ENCODE measurements at regions of chr2 and their contacts with region 1.

Region 1: GRCh38 chr2:199488772-199489400 is 31.1 kb upstream of the SATB2 start:
- DNase-seq: no peak
- ATAC-seq: peak; percentile 73
- H3K4me3 ChIP-seq: no peak overlapping the region
- H3K27ac ChIP-seq: no peak overlapping the region
- H3K4me1 ChIP-seq: no peaks in the 10 kb centered on the region
- H3K27me3 ChIP-seq: no peaks in the 10 kb centered on the region
- CTCF ChIP-seq: peak; percentile 72 to 90 (median 83)
- EP300 ChIP-seq: no peak
- POLR2A ChIP-seq: no peak
- RAD21 ChIP-seq: peak; percentile 72

Region 2: DNA sequence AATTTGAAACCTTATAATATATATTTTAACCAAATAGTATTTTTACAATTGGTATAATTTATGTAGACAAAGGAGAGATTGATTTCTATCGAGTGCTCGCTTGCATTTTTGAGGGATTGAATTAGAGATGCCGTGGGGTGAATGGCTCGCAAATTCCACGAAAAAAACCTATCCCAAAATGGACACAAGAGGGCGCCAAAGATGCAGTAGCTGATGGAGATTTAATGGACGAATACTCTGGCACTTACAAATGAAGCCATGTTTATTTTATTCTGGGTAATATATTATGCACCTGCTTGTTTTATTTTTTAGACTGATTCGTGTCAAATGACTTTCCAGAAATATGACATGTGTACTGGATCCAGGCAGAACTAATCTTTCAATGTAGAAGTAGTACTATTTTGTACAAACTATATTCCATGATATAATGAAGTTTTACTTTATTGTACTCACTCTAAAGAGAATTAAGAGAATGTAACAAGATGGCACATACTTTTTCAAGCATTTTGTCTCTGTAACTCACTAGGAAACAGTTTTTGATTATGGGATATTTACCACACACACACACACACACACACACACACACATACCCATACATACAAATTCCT is 1179.1 kb before region 1 on chr2:
- CTCF ChIA-PET with region 1: interaction called, 311 read pairs
- POLR2A ChIA-PET with region 1: no interaction called
- RAD21 ChIA-PET with region 1: interaction called, 132 read pairs
- SMC1A ChIA-PET with region 1: interaction called, 130 read pairs
- in situ Hi-C with region 1: loop called (anchors 5 kb)
- intact Hi-C with region 1: loop called (anchors 1 kb)
- DNase-seq: no peak
- ATAC-seq: peak; percentile 67
- H3K4me3 ChIP-seq: no peak overlapping the region
- H3K27ac ChIP-seq: no peak overlapping the region
- H3K4me1 ChIP-seq: no peaks in the 10 kb centered on the region
- H3K27me3 ChIP-seq: peaks cover 1 to 2% of the 10 kb centered on the region in 2 experiments; a peak in 1 of 4 replicates
- CTCF ChIP-seq: peak; percentile 69 to 83 (median 81)
- EP300 ChIP-seq: no peak
- POLR2A ChIP-seq: no peak
- RAD21 ChIP-seq: peak; percentile 79

Region 3: DNA sequence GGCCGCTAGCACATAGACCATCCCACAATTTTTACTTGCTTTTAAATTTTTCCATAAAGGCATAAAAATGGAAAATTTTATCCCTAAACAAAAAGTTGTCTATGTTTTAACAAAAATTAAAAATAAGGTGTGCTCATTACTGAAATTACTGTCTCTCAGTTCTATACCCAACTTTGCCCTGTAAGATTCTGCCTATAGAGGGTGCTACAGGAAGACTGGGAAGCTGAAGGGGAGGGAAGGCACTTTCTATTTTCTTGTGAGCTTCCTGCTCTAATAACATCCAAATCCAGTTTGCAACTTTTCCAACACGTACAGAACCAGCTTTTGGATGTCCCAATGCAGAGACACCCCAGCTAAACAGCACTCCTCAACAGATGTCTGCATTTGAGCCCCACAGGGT is 1017.6 kb before region 1 on chr2:
- CTCF ChIA-PET with region 1: interaction called, 23 read pairs
- POLR2A ChIA-PET with region 1: no interaction called
- RAD21 ChIA-PET with region 1: interaction called, 13 read pairs
- SMC1A ChIA-PET with region 1: interaction called, 12 read pairs
- in situ Hi-C with region 1: no loop called
- intact Hi-C with region 1: no loop called
- DNase-seq: no peak
- ATAC-seq: no peak
- H3K4me3 ChIP-seq: no peak overlapping the region
- H3K27ac ChIP-seq: no peak overlapping the region
- H3K4me1 ChIP-seq: no peaks in the 10 kb centered on the region
- H3K27me3 ChIP-seq: no peaks in the 10 kb centered on the region
- CTCF ChIP-seq: peak in 2 of 3 experiments; percentile 13 to 37; a peak in 2 of 6 replicates
- EP300 ChIP-seq: no peak
- POLR2A ChIP-seq: no peak
- RAD21 ChIP-seq: no peak

Region 4: GRCh38 chr2:198762441-198762840 is 726.4 kb before region 1 on chr2:
- CTCF ChIA-PET with region 1: no interaction called
- POLR2A ChIA-PET with region 1: no interaction called
- RAD21 ChIA-PET with region 1: no interaction called
- SMC1A ChIA-PET with region 1: no interaction called
- in situ Hi-C with region 1: no loop called
- intact Hi-C with region 1: no loop called
- DNase-seq: no peak
- ATAC-seq: peak; percentile 45
- H3K4me3 ChIP-seq: no peak overlapping the region
- H3K27ac ChIP-seq: no peak overlapping the region
- H3K4me1 ChIP-seq: no peaks in the 10 kb centered on the region
- H3K27me3 ChIP-seq: no peaks in the 10 kb centered on the region
- CTCF ChIP-seq: no peak
- EP300 ChIP-seq: no peak
- POLR2A ChIP-seq: no peak
- RAD21 ChIP-seq: no peak

Region 5: DNA sequence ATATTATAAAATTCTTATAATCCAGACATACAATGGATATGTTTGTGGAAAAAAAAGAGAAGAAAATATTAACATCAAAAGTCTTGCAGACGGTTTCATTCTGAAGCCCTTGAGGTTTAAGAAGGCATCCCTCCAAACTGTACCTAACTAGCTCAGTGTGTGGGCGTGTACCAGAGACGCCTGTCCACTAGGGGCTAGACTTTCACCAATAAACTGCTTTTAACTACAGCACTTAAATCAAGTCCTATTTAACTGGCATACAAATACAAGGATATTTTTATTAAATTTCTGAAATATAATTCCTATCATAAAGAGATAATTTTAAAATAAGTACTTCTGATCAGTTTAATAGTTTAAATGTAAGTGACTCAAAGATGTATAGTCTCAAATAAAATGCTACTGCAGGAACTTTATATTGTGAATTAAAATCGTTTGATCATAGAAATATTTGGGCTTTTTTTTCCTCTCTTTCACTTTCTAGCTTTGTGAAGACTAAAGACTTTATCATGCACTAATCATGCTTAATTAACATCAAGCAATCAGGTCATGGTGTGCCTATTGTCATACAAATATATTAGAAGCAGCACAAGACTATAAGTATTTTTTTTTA is 468.9 kb before region 1 on chr2:
- CTCF ChIA-PET with region 1: interaction called, 11 read pairs
- POLR2A ChIA-PET with region 1: no interaction called
- RAD21 ChIA-PET with region 1: interaction called, 5 read pairs
- SMC1A ChIA-PET with region 1: interaction called, 6 read pairs
- in situ Hi-C with region 1: no loop called
- intact Hi-C with region 1: loop called (anchors 10 kb)
- DNase-seq: no peak
- ATAC-seq: peak; percentile 89
- H3K4me3 ChIP-seq: no peak overlapping the region
- H3K27ac ChIP-seq: no peak overlapping the region
- H3K4me1 ChIP-seq: no peaks in the 10 kb centered on the region
- H3K27me3 ChIP-seq: no peaks in the 10 kb centered on the region
- CTCF ChIP-seq: peak; percentile 29 to 51 (median 37); a peak in 4 of 6 replicates
- EP300 ChIP-seq: no peak
- POLR2A ChIP-seq: no peak
- RAD21 ChIP-seq: 0 out of 2 replicates have a peak, but pooled peaks have one; percentile 5

Region 6: DNA sequence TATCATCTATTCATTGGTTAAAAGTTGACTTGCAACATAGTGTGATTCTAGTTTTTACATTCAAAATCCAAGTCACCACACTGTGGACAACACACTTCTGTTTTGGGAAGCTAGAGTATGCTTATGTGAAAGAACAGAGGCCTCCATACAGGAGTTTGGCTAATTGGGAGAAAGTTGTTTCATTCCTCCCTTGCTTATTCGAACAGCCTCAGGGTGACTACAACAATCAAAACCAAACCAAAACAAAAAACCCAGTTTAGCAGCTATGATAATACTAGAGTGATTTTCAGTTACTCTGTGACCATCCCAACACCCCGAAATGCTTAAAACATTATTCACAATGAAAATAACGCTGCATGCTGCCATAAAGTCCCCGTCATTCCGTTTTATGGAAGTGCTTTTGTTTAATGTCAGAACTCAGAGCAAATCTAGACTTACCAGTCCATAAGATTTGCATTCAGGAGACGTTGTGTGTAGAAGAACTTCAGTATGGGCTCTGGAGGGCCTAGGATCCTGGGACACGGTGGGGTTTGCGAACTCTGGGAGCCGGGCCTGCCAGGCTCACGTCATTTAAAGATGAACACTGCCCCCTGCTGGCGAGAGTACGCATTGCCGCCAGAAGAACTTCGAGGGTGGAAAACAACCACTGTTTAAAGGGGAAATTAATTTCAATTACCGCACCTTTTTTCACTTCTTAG is 250.7 kb after region 1 on chr2:
- CTCF ChIA-PET with region 1: interaction called, 16 read pairs
- POLR2A ChIA-PET with region 1: no interaction called
- RAD21 ChIA-PET with region 1: interaction called, 5 read pairs
- SMC1A ChIA-PET with region 1: interaction called, 12 read pairs
- in situ Hi-C with region 1: no loop called
- intact Hi-C with region 1: loop called (anchors 5 kb)
- DNase-seq: no peak
- ATAC-seq: peak; percentile 68
- H3K4me3 ChIP-seq: no peak overlapping the region
- H3K27ac ChIP-seq: no peak overlapping the region
- H3K4me1 ChIP-seq: no peaks in the 10 kb centered on the region
- H3K27me3 ChIP-seq: peaks cover 0 to 2% of the 10 kb centered on the region in 2 experiments; a peak in 1 of 4 replicates
- CTCF ChIP-seq: peak; percentile 72 to 81 (median 79)
- EP300 ChIP-seq: no peak
- POLR2A ChIP-seq: no peak
- RAD21 ChIP-seq: peak; percentile 78